Aorta (tissue), 5 donors: ENCODE measurements at regions of chr6 and their contacts with region 1.

Region 1: GRCh38 chr6:57316581-57317059 is 810 bp upstream of the PRIM2 start:
- DNase-seq: peak; percentile 87 to 92
- ATAC-seq: peak; percentile 95
- H3K4me3 ChIP-seq: peak overlapping the region; percentile 74 to 84
- H3K27ac ChIP-seq: no peak overlapping the region
- H3K4me1 ChIP-seq: no peaks in the 10 kb centered on the region
- H3K27me3 ChIP-seq: no peaks in the 10 kb centered on the region

Region 2: DNA sequence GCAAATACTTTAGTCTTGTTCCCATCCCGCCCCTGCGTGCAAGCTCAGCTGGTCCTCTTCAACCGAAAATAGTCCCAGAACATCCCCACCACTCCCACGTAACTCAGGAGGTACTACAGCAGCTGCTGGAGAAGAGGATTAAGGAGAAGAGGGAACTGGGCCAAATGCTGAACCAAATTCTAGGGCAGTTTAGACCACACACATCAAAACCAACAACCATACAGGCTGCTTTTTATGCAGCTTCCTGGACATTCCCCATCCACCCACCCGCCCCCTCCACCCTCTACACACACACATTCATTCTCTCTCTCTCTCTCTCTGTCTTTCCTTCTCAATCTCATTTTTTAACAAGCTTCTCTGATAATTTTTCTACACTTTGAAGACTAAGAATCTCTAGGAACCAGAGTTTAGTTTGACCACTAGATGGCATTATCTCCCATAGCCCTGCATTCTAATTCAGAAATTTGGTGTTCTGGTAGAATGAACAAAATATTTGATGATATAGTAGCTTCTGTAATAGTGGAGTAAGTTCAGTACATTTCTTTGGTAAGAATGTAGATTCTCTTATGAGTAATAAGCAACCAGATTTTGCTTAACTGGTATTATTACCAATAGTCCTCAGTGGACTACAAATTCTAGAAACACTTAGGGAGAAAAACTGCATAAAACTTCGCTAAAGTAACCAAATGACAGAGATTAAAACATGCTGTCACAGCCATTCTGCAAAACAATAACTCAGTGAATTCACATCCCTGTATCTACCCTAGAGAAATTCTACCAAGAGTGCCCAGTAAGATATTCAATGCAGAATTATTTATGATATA is 413.8 kb before region 1 on chr6:
- intact Hi-C with region 1: loop called (anchors 2 to 5 kb)
- DNase-seq: no peak
- ATAC-seq: no peak
- H3K4me3 ChIP-seq: no peak overlapping the region
- H3K27ac ChIP-seq: no peak overlapping the region
- H3K4me1 ChIP-seq: peaks cover 0 to 3% of the 10 kb centered on the region in 2 donors
- H3K27me3 ChIP-seq: no peaks in the 10 kb centered on the region

Region 3: DNA sequence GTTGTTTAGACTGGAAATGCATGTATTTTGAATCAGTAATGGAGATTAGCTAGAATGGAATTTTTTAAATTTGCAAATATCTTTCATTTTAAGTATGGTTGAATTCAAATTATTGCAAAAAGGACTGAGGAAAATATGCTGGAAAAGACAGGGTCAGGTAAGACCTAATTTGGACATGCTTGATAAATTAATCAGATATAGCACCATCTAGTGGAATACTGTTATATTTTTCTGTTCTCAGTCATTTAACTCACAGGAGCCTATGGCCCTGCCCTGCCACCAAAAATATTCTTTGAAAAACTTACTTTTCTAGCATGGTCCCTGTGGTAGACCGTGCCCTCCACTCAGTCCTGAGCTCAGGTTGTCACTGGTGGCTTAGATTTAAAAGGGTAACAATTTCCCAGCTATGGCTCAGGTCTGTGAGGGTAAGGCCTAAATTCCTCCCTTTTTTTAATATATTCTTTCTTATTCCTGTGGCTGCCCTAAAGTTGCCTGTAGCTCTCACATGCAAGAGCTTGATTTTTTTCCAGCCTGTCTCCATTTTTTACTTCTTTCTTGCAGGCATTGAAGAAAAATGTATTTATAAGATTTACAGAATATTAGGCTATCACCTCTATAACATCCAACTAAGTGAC is 295.4 kb before region 1 on chr6:
- intact Hi-C with region 1: loop called in 1 of 2 experiments (anchors 5 kb)
- DNase-seq: no peak
- ATAC-seq: peak; percentile 60
- H3K4me3 ChIP-seq: no peak overlapping the region
- H3K27ac ChIP-seq: no peak overlapping the region
- H3K4me1 ChIP-seq: no peaks in the 10 kb centered on the region
- H3K27me3 ChIP-seq: no peaks in the 10 kb centered on the region

Region 4: GRCh38 chr6:57089687-57090460 is 226.7 kb before region 1 on chr6 and contains the start of gene ZNF451:
- intact Hi-C with region 1: loop called (anchors 5 kb)
- DNase-seq: peak; percentile 99
- ATAC-seq: peak; percentile 98
- H3K4me3 ChIP-seq: peak within 1 kb of the TSS; percentile 31 to 57
- H3K27ac ChIP-seq: peak within 1 kb of the TSS in 1 of 2 donors; percentile 80
- H3K4me1 ChIP-seq: peaks cover 0 to 3% of the 10 kb centered on the region in 2 donors
- H3K27me3 ChIP-seq: no peaks in the 10 kb centered on the region
- total RNA-seq, gene ZNF451: 64.3 to 66.2 TPM

Region 5: DNA sequence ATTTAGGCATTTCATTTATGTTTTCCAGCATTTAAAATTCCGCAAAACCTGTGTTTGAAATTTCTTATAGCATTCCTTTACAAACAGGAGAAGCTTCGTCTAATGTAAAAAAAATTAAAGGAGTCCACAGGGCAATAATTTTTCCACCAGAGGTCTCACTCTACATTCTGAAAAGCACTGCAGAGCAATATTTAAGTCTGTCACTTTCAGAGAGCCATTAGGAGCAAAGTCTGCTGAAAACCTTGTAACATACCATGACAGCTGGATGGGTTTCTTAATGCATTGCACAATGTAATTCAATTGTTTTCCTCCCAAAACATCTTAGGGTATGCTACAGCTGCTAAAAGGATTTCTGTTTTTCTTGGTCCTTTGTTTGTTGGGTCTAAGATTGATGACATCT is 126.5 kb before region 1 on chr6:
- intact Hi-C with region 1: loop called (anchors 1 to 5 kb)
- DNase-seq: no peak
- ATAC-seq: peak; percentile 66
- H3K4me3 ChIP-seq: no peak overlapping the region
- H3K27ac ChIP-seq: no peak overlapping the region
- H3K4me1 ChIP-seq: no peaks in the 10 kb centered on the region
- H3K27me3 ChIP-seq: no peaks in the 10 kb centered on the region

Region 6: DNA sequence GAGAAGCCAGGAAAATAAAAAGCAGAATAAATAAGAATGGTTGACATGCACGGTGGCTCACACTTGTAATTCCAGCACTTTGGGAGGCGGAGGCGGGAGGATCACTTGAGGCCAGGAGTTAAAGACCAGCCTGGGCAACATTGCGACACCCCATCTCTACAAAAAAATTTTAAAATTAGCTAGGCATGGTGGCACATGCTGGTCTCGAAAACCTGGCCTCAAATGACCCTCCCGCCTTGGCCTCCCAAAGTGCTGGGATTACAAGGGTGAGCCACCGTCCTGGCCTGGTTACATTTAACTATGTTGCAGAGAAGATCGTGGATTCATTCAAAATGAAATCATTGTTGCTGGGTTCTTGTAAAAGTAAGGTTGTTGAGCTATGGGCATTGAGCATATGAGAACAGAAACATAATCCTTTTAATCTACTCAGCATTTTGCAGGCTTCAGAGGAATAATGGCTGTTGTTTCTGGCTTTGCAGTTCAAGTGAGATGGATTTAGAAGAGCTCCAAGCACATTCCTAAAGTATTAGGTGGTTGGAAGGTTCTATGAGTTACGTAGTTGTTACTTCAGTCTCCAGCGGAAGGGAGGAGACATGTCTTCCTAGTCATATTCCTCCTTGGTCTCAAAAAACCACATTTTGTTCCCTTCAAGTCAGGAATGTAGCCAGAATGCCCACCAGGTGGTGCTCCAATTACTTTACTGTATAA is 48.9 kb before region 1 on chr6:
- intact Hi-C with region 1: loop called (anchors 2 kb)
- DNase-seq: peak in 1 of 2 donors; percentile 75
- ATAC-seq: peak; percentile 94
- H3K4me3 ChIP-seq: no peak overlapping the region
- H3K27ac ChIP-seq: peak overlapping the region in 1 of 2 donors; percentile 76
- H3K4me1 ChIP-seq: peaks cover 0 to 22% of the 10 kb centered on the region in 2 donors
- H3K27me3 ChIP-seq: no peaks in the 10 kb centered on the region

Region 7: GRCh38 chr6:57469072-57469471 is 152.5 kb after region 1 on chr6:
- intact Hi-C with region 1: no loop called
- DNase-seq: no peak
- ATAC-seq: no peak
- H3K4me3 ChIP-seq: no peak overlapping the region
- H3K27ac ChIP-seq: no peak overlapping the region
- H3K4me1 ChIP-seq: no peaks in the 10 kb centered on the region
- H3K27me3 ChIP-seq: no peaks in the 10 kb centered on the region